Panc1 (cell line): ENCODE measurements at regions of chr7 and their contacts with region 1.

Region 1: DNA sequence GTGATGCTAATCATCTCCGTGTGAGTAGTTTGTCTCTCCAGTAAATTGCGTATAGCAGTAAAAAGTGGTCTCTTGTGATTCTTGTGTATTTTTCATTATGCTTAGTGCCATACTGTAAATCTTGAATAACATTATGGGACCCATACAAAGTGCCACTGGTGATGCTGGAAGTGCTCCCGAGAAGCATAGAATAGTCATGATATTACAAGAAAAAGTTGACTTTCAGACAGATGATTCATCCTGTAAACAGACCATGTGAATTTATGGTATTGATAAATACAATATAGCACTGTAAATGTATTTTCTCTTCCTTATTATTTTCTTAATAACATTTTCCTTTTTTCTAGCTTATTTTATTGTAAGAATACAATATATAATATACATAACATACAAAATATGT is 74.6 kb upstream of the CDK6 start:
- DNase-seq: no peak
- ATAC-seq: no peak
- H3K4me3 ChIP-seq: no peak overlapping the region
- H3K27ac ChIP-seq: no peak overlapping the region
- H3K4me1 ChIP-seq: peaks cover 2% of the 10 kb centered on the region; the same call in 1 of the 2 replicates
- H3K27me3 ChIP-seq: no peaks in the 10 kb centered on the region
- CTCF ChIP-seq: no peak

Region 2: DNA sequence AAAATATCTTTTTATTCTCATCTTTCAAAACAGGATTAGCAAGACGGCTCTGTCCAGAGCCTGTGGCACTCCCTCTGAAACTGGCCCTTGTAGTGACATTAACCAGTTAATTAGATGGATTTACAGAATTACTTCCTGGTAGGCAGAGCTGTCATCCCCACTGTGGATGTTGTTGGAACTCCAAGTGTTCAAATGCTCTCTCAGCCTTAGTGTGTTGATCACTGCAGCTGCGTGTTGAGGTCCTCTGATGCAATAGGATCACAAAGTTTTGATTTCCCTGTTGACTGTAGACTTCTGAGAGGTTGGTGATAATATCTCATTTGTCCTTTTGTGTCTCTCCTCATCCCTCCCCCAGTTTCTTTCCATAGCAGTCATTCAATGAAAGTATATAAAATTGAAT is 42.7 kb after region 1 on chr7:
- CTCF ChIA-PET with region 1: no interaction called
- POLR2A ChIA-PET with region 1: interaction called, 14 read pairs
- in situ Hi-C with region 1: no loop called
- intact Hi-C with region 1: no loop called
- DNase-seq: no peak
- ATAC-seq: no peak
- H3K4me3 ChIP-seq: no peak overlapping the region
- H3K27ac ChIP-seq: no peak overlapping the region; the same call in 1 of the 2 replicates
- H3K4me1 ChIP-seq: no peaks in the 10 kb centered on the region
- H3K27me3 ChIP-seq: no peaks in the 10 kb centered on the region
- CTCF ChIP-seq: no peak

Region 3: DNA sequence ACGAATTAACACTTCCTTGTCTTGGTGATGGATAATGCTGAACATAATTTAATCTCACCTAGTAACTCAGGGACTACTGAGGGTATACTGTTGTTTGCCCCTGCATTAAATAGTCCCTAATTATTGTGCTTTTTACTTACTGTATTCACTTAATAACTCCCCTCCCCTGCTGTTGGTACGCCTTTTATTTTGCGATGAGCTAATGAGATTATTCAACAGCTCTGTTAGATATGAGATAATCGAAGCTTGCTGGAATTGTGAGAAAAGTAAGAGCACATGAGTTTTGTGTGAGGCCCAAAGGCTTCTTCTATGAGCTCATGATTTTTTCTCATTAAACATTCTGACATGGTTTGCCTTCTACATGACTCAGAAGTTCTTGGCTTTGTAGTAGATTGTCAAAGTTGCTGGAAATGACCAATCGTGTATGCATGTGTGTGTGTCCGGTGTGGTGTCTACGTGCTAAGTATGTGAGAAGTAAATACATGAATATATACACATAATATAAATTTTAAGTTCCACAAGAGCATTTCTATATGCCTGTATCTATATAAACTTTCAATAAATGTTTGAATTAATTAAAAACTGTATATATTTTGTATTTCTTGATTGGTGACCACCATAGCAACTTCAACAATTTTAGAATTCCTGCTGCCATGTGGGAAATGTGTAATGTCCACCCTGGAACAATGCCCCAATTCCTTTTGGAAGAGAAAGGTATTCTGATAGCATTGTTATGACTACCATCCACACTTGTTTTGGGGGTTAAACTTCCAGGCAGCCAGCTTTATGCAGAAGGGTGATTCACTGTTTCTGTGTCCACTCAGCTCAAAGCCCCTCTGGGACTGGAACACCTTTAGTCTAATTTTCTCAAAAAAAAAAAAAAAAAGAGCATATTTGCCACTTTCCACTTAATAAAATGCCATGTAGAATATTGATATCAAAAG is 100.6 kb after region 1 on chr7:
- CTCF ChIA-PET with region 1: no interaction called
- POLR2A ChIA-PET with region 1: no interaction called
- in situ Hi-C with region 1: no loop called
- intact Hi-C with region 1: no loop called
- DNase-seq: no peak
- ATAC-seq: no peak
- H3K4me3 ChIP-seq: no peak overlapping the region
- H3K27ac ChIP-seq: no peak overlapping the region
- H3K4me1 ChIP-seq: no peaks in the 10 kb centered on the region
- H3K27me3 ChIP-seq: no peaks in the 10 kb centered on the region
- CTCF ChIP-seq: no peak